Gastrocnemius medialis (tissue), 4 donors: ENCODE measurements at regions of chr19 and their contacts with region 1.

Region 1: GRCh38 chr19:52570000-52570861 is at the start of gene ZNF701:
- DNase-seq: peak; percentile 88 to 91
- ATAC-seq: peak; percentile 99
- H3K4me3 ChIP-seq: peak within 1 kb of the TSS; percentile 66 to 98 (median 80)
- H3K27ac ChIP-seq: peak within 1 kb of the TSS; percentile 70 to 83 (median 79)
- H3K4me1 ChIP-seq: peaks cover 6 to 8% of the 10 kb centered on the region in 2 donors
- H3K27me3 ChIP-seq: no peaks in the 10 kb centered on the region
- CTCF ChIP-seq: peak in 4 of 5 experiments; percentile 43 to 60 (median 48)
- POLR2A ChIP-seq: peak; percentile 85 to 86
- total RNA-seq, gene ZNF701: 4.0 to 6.2 (median 4.8) TPM

Region 2: GRCh38 chr19:52409941-52410675 is 160.1 kb before region 1 on chr19:
- in situ Hi-C with region 1: no loop called
- intact Hi-C with region 1: no loop called
- DNase-seq: no peak
- ATAC-seq: no peak
- H3K4me3 ChIP-seq: no peak overlapping the region
- H3K27ac ChIP-seq: no peak overlapping the region
- H3K4me1 ChIP-seq: no peaks in the 10 kb centered on the region
- H3K27me3 ChIP-seq: no peaks in the 10 kb centered on the region
- CTCF ChIP-seq: no peak
- POLR2A ChIP-seq: no peak

Region 3: GRCh38 chr19:52535771-52536447 is 34.3 kb before region 1 on chr19:
- in situ Hi-C with region 1: no loop called
- intact Hi-C with region 1: loop called (anchors 2 kb)
- DNase-seq: peak; percentile 68 to 79
- ATAC-seq: peak; percentile 69 to 80
- H3K4me3 ChIP-seq: peak overlapping the region; percentile 59 to 74 (median 70)
- H3K27ac ChIP-seq: peak overlapping the region; percentile 69 to 88 (median 82)
- H3K4me1 ChIP-seq: peaks cover 25% of the 10 kb centered on the region in 2 donors
- H3K27me3 ChIP-seq: no peaks in the 10 kb centered on the region
- CTCF ChIP-seq: peak in 2 of 5 experiments; percentile 39 to 47
- POLR2A ChIP-seq: peak; percentile 32 to 44